ENCODE measurements at regions of chr4 and their contacts with region 1.

Region 1: GRCh38 chr4:20773144-20773997 is 73.1 kb downstream of the PACRGL start:
- DNase-seq: peak in 1 of 2 donors; percentile 34
- ATAC-seq: peak in 2 of 8 donors; percentile 39 to 47
- H3K4me3 ChIP-seq: no peak overlapping the region
- H3K27ac ChIP-seq: no peak overlapping the region
- H3K4me1 ChIP-seq: no peaks in the 10 kb centered on the region
- H3K27me3 ChIP-seq: no peaks in the 10 kb centered on the region
- CTCF ChIP-seq: peak; percentile 22 to 68 (median 58)

Region 2: GRCh38 chr4:21134994-21135393 is 361.6 kb after region 1 on chr4:
- intact Hi-C with region 1: loop called in 5 of 10 experiments (anchors 5 to 10 kb)
- DNase-seq: no peak
- ATAC-seq: no peak
- H3K4me3 ChIP-seq: no peak overlapping the region
- H3K27ac ChIP-seq: no peak overlapping the region
- H3K4me1 ChIP-seq: no peaks in the 10 kb centered on the region
- H3K27me3 ChIP-seq: no peaks in the 10 kb centered on the region
- CTCF ChIP-seq: peak in 4 of 9 donors; percentile 17 to 23 (median 18)

Region 3: GRCh38 chr4:21469438-21470300 is 696.3 kb after region 1 on chr4:
- intact Hi-C with region 1: loop called in 1 of 10 experiments (anchors 10 kb)
- DNase-seq: no peak
- ATAC-seq: no peak
- H3K4me3 ChIP-seq: no peak overlapping the region
- H3K27ac ChIP-seq: no peak overlapping the region
- H3K4me1 ChIP-seq: no peaks in the 10 kb centered on the region
- H3K27me3 ChIP-seq: peaks cover 0 to 5% (median 0%) of the 10 kb centered on the region in 7 donors
- CTCF ChIP-seq: peak in 7 of 9 donors; percentile 6 to 56 (median 33)

Region 4: DNA sequence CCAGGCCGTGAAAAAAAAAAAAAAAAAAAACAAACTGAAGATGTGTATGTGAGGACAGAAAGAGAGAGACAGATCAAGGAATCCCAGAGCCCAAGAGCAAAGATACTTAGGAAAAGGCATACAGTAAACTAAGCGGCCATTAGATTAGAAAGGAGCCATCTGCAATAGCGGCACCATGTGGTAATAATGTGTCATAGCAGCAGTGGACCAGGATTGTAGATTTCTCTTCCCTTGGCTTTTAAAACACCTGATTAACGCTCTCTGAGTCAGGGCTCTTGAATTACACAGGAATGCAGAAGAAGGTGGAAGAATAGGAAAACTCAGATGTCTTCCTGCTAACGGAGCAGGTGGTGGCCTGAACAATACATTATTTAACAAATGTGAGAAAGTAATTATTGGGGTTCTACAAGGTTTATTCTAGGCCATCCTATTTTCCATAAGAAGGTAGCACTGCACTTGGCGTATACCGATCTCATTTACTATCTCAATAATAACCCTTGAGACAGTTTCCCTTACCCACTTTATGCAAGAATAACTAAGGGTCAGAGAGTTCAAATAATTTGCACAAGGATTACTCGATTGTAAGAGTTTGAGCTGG is 992.5 kb after region 1 on chr4:
- intact Hi-C with region 1: loop called in 3 of 10 experiments (anchors 5 to 10 kb)
- DNase-seq: no peak
- ATAC-seq: peak in 1 of 8 donors; percentile 37
- H3K4me3 ChIP-seq: no peak overlapping the region
- H3K27ac ChIP-seq: no peak overlapping the region
- H3K4me1 ChIP-seq: no peaks in the 10 kb centered on the region
- H3K27me3 ChIP-seq: no peaks in the 10 kb centered on the region
- CTCF ChIP-seq: peak; percentile 42 to 84 (median 74)